ENCODE measurements at regions of chr9 and their contacts with region 1.

Region 1: DNA sequence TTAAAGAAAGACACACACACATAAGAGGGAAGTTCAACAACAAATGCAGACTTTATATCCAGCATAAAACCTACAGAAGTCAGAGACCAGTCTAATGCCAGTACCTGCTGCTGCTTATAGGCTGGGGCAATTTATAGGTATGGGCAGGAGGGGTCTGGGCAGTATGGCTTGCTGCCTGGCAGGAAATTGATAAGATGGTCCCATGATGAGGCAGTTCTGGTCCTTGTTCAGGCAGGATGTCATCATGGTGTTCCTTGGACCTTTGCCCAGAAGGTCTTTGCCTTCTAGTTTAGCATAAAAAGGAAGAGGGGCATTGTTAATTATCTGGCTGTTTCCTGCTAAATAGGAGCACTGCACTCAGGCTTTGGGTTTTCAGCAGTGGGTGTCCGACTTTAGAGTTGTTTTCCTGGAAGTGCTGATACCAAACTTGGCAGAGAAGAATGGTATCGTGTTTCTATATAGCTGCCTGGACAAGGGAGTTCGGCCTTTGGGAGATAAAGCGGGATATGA is 10.4 kb upstream of the PDCD1LG2 start:
- DNase-seq: peak; percentile 97
- H3K4me3 ChIP-seq: no peak overlapping the region
- H3K27ac ChIP-seq: peak overlapping the region; percentile 89
- H3K4me1 ChIP-seq: peaks cover 33% of the 10 kb centered on the region
- H3K27me3 ChIP-seq: no peaks in the 10 kb centered on the region
- CTCF ChIP-seq: no peak
- POLR2A ChIP-seq: peak; percentile 95

Region 2: DNA sequence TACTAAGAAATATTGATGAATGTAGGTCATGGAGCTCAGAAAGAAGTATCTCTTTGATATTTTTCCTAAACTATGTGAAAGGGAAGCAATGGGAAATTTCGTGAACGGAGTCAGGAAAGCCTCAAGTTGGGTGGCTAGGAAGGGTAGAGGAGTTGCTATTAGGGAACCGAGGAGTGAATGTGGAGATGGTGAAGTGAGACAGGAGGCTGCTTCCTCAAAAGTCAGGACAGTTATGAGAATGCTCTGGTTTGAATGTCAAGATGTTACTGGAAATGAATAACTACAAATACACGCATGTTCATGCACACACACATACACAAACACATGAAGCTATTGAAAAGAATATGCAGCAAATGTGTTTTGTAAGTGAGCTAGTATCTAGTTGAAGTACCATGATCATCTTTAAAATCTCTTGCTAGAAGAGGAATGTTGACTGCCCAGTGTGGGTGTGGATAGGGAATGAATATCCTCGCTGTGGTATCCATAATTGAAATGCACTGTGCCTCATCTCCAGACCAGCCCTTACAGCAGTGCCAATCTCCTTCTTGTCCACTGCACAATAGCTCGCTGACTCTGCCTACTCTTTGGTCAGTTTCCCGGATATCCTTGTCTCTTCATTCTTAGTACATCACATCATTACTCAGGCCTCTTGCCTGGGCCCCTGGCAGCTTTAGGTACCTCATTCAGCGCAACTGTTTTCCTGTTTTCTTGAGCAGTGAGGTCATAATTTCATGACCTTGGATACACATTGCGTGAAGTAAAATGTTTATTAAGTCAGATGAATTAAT is 11.5 kb before region 1 on chr9:
- CTCF ChIA-PET with region 1: interaction called, 19 read pairs
- POLR2A ChIA-PET with region 1: interaction called, 18 read pairs
- dilution Hi-C with region 1: no loop called
- intact Hi-C with region 1: loop called (anchors 1 kb)
- DNase-seq: peak; percentile 88
- H3K4me3 ChIP-seq: no peak overlapping the region
- H3K27ac ChIP-seq: peak overlapping the region; percentile 74
- H3K4me1 ChIP-seq: peaks cover 33% of the 10 kb centered on the region
- H3K27me3 ChIP-seq: no peaks in the 10 kb centered on the region
- CTCF ChIP-seq: no peak
- POLR2A ChIP-seq: peak; percentile 69

Region 3: GRCh38 chr9:5543875-5544702 is 44.1 kb after region 1 on chr9:
- CTCF ChIA-PET with region 1: no interaction called
- POLR2A ChIA-PET with region 1: no interaction called
- dilution Hi-C with region 1: no loop called
- intact Hi-C with region 1: no loop called
- DNase-seq: no peak
- H3K4me3 ChIP-seq: no peak overlapping the region
- H3K27ac ChIP-seq: no peak overlapping the region
- H3K4me1 ChIP-seq: no peaks in the 10 kb centered on the region
- H3K27me3 ChIP-seq: no peaks in the 10 kb centered on the region
- CTCF ChIP-seq: no peak
- POLR2A ChIP-seq: no peak